ENCODE measurements at regions of chr10 and their contacts with region 1.

Region 1: DNA sequence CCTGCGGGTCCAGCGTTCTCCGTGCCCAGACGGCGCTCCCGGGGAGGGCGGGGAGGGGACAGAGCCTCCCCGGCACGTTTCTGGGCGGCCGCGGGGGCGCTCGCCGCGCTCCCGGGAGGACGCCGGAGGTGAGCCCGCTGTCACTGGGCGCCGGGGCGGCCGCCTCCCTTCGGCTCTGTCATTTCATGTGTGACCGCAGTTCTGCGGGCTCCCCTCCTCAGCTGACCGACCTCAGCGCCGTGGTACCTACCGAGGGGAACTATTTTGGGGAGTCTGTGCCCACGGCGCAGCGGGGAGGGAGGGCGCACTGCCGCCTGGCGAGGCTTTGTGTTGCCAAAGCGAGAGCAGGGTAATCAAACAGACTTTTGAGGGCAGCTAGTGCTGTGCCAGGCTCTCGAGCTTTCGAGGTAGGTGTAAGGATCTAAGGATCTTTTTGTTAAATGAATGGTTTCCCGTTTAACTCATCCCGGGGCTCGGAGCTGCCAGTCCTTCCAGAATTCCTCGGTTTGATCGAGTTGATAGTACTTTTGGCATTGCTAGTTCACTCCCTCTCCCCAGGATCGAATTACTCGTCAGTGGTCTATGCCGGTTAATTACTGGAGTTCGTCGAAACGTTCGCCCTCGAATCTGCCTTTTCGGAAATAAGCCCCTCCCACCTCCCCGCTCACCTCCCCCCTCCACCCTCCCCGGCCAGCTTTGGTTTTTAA is 1.9 kb downstream of the ARID5B start:
- DNase-seq: peak; percentile 92
- H3K4me3 Mint-ChIP-seq: peak overlapping the region; percentile 92
- H3K27ac Mint-ChIP-seq: peak overlapping the region; percentile 95
- H3K4me1 Mint-ChIP-seq: peaks cover 36% of the 10 kb centered on the region
- H3K27me3 Mint-ChIP-seq: no peaks in the 10 kb centered on the region

Region 2: DNA sequence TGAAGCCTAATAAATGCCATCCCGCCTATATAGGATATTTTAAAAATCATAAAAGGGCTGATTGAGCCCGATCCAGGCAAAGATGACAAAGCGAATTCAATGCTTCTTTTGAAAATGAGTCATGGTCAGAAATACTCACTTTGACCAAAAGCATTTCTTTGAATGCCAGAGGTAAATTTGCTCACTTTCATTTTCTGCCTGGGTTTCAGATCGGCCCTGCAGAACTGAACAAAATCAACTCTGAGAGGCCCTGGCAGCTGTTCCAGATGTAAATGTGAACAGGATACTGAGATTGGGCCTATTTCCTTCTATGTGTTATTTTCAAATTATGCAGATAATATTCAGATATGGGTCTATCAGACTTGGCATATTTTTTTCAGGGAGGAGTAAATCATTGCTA is 116.6 kb before region 1 on chr10:
- intact Hi-C with region 1: no loop called
- DNase-seq: peak; percentile 69
- H3K4me3 Mint-ChIP-seq: no peak overlapping the region
- H3K27ac Mint-ChIP-seq: no peak overlapping the region
- H3K4me1 Mint-ChIP-seq: peaks cover 49% of the 10 kb centered on the region
- H3K27me3 Mint-ChIP-seq: no peaks in the 10 kb centered on the region

Region 3: DNA sequence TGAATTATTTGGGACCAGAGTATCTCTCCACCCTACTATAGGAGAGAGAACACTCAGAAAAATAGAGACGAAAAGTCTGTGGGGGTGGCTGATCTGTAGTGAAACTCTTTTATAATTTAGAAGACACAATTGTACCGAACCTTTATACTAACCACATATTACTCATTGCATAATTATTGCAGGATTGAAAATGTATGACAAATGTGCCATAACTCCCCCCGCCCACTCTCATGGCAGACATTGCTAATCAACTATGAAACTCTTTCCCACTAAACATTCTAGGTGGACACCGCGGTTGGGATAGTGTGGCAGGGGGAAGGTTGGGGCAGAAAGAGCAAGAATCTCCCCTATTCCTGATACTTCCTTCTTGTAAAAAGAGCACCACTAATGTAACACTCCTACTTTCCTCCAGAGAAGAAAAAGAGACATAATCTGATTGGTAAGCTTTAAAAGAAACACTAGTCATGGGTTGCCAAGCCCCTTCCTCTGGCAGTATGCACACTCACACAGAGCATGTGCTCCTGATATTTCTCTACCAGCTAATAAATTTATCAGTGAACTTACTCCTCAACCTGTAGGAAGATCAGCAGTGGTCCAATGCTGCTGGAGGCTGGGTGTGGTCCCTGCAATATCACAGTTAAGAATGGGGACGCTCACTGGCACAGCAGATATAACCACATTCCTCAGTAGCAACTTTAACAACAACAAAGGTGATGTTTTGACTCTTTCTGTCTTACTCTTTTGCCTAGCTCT is 20.6 kb before region 1 on chr10:
- intact Hi-C with region 1: loop called (anchors 1 kb)
- DNase-seq: no peak
- H3K4me3 Mint-ChIP-seq: peak overlapping the region; percentile 32
- H3K27ac Mint-ChIP-seq: peak overlapping the region; percentile 79
- H3K4me1 Mint-ChIP-seq: peaks cover 16% of the 10 kb centered on the region
- H3K27me3 Mint-ChIP-seq: peaks cover 2% of the 10 kb centered on the region

Region 4: DNA sequence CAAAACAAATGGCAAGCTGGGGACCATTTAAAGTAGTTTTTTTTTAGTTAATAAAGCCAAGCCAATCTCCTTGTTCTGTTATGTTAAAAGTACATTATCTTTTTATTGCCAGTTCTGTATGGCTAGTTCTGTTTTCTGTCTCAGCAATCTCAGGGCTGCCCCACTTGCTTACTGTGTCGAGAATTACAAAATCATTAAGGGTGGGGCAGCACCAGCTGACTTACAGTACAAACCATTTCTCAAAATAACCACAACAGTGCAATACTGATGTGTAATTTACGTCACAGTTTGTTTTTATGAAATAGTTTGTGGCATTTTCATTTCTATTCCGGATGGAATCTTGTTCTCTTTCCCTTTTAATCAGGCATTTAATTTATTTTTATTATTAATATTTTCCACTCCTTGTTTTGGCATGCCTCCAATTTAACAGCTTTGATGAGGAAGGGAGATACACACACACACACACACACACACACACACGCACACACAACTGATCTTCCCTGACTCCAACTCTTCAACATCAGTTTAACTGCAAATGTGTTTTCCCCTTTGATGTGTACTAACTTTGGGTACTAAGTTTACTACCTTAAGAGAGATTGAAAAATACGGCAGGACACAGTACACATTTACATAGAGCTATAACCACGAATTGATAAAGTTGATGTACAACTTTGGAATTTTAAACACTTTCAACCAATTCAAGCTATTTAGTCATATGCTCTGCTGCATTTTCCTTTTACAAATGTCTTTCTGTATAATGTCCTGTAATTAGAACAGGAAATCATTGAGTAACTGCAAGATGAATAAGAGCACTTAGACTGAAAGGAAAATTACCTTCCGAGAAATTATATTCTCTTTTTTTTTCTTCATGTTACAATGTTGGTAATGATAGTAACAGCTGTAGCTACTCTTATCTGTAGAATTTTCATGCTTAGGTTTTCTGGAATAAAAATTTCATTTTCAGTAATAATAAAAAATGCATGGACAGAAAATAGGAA is 89.6 kb after region 1 on chr10:
- intact Hi-C with region 1: loop called (anchors 1 kb)
- DNase-seq: peak; percentile 91
- H3K4me3 Mint-ChIP-seq: peak overlapping the region; percentile 77
- H3K27ac Mint-ChIP-seq: peak overlapping the region; percentile 93
- H3K4me1 Mint-ChIP-seq: peaks cover 65% of the 10 kb centered on the region
- H3K27me3 Mint-ChIP-seq: no peaks in the 10 kb centered on the region

Region 5: GRCh38 chr10:62732841-62733653 is 829.7 kb after region 1 on chr10:
- intact Hi-C with region 1: loop called (anchors 10 kb)
- DNase-seq: peak; percentile 91
- H3K4me3 Mint-ChIP-seq: no peak overlapping the region
- H3K27ac Mint-ChIP-seq: no peak overlapping the region
- H3K4me1 Mint-ChIP-seq: peaks cover 43% of the 10 kb centered on the region
- H3K27me3 Mint-ChIP-seq: peaks cover 1% of the 10 kb centered on the region

Region 6: DNA sequence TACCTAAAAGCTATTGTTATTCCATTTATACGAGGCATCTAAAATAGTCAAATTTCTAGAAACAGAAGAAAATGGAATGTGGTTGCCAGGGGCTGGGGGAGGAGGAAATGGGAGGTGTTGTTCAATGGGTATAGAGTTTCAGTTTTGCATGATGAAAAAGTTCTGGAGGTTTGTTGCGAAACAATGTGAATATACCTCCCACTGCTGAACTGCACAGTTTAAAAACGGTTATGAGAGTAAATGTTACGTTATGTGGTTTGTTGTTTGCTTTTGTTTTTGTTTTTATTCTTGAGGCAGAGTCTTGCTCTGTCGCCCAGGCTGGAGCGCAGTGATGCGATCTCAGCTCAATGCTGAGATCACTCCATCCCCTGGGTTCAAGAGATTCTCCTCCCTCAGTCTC is 1164.9 kb after region 1 on chr10:
- intact Hi-C with region 1: loop called (anchors 5 kb)
- DNase-seq: peak; percentile 70
- H3K4me3 Mint-ChIP-seq: peak overlapping the region; percentile 49
- H3K27ac Mint-ChIP-seq: peak overlapping the region; percentile 34
- H3K4me1 Mint-ChIP-seq: peaks cover 38% of the 10 kb centered on the region
- H3K27me3 Mint-ChIP-seq: peaks cover 15% of the 10 kb centered on the region